Heart left ventricle (tissue), 16 donors: ENCODE measurements at regions of chr3 and their contacts with region 1.

Region 1: GRCh38 chr3:140319696-140320200 is 358.1 kb upstream of the TRIM42 start:
- DNase-seq: no peak
- ATAC-seq: no peak
- H3K4me3 ChIP-seq: no peak overlapping the region
- H3K27ac ChIP-seq: no peak overlapping the region
- H3K4me1 ChIP-seq: no peaks in the 10 kb centered on the region
- H3K27me3 ChIP-seq: peaks cover 0 to 4% (median 0%) of the 10 kb centered on the region in 9 donors
- CTCF ChIP-seq: no peak
- POLR2A ChIP-seq: no peak

Region 2: DNA sequence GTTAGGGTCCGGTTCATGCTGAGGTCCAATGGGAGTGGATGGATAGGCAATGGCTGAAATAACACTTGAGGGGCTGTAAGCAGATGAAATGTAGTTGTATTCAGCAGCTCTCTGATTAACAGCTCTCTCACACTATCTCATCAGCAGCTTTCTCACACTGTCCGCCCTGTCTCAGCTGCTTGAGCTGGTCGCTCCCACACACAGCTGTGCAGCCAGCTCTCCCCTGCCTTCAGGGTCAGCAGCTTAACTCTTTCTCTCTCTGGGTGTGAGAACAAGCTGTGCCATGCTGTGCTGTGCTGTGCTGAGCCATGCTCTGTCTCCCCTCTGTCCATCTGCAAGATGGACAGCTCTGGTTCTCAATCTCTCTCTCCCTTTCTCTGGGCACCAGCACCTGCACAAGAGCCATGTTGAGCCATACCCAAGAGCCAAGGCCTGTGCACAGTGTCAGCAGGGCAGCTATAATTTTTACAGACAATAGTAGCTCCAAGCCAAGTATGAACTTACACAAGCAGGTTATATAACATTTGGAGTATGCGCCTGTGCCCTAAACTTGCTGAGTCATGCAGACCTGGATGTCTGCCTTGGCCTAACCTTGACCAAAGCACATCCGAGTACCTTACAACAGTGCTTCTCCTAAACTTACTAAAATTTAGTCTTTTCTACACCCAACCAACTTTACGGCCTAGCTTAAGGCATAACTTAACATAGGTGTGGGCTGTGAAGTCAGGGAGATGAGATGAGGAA is 66.8 kb after region 1 on chr3:
- intact Hi-C with region 1: loop called in 1 of 10 experiments (anchors 10 kb)
- DNase-seq: no peak
- ATAC-seq: peak; percentile 32 to 75 (median 55)
- H3K4me3 ChIP-seq: no peak overlapping the region
- H3K27ac ChIP-seq: no peak overlapping the region
- H3K4me1 ChIP-seq: peaks cover 0 to 7% (median 0%) of the 10 kb centered on the region in 12 donors
- H3K27me3 ChIP-seq: peaks cover 0 to 3% (median 0%) of the 10 kb centered on the region in 9 donors
- CTCF ChIP-seq: no peak
- POLR2A ChIP-seq: no peak

Region 3: DNA sequence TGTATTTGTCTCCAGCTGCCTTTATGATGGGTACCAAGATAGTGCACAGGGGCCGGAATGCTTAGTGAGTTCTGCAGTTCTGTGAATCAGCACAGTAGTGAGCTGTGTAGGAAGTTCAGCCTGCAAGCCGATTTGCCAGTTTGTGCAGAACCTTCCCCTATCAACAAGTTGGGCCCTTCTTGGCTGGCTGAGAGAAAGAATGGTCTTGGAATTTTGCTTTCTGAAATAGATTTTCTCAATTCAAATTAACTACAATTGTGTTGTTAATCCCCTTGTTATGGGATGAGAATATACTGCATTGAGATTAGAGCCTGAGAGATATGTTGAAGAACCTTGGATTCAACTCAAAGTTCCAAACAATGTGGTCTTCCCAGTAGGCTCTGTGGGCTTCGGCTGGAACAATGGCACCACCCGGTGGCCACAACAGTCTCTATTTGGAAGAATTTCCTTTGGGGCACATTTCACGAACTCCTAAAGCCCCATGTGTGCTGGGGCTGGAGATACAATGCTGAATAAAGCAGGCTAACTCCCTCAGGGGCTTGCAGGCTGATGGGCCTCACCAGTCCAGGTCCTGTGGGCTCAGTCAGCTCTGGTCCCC is 417.2 kb after region 1 on chr3:
- intact Hi-C with region 1: no loop called
- DNase-seq: peak; percentile 25 to 73 (median 48)
- ATAC-seq: peak in 3 of 4 donors; percentile 49 to 73 (median 69)
- H3K4me3 ChIP-seq: no peak overlapping the region
- H3K27ac ChIP-seq: no peak overlapping the region
- H3K4me1 ChIP-seq: no peaks in the 10 kb centered on the region
- H3K27me3 ChIP-seq: peaks cover 0 to 10% (median 0%) of the 10 kb centered on the region in 9 donors
- CTCF ChIP-seq: peak; percentile 46 to 66 (median 55)
- POLR2A ChIP-seq: no peak